B cell (primary cell): ENCODE measurements at regions of chr5 and their contacts with region 1.

Region 1: GRCh38 chr5:157548513-157549297 is 26.9 kb downstream of the ADAM19 start:
- DNase-seq: no peak
- ATAC-seq: no peak
- H3K4me3 ChIP-seq: no peak overlapping the region
- H3K4me3 Mint-ChIP-seq: peak overlapping the region; percentile 55
- H3K27ac ChIP-seq: peak overlapping the region; percentile 3 to 80
- H3K27ac Mint-ChIP-seq: peak overlapping the region; percentile 85
- H3K4me1 ChIP-seq: peaks cover 86% of the 10 kb centered on the region in 2 donors
- H3K4me1 Mint-ChIP-seq: peaks cover 90% of the 10 kb centered on the region
- H3K27me3 ChIP-seq: no peaks in the 10 kb centered on the region
- H3K27me3 Mint-ChIP-seq: no peaks in the 10 kb centered on the region
- CTCF ChIP-seq: no peak

Region 2: DNA sequence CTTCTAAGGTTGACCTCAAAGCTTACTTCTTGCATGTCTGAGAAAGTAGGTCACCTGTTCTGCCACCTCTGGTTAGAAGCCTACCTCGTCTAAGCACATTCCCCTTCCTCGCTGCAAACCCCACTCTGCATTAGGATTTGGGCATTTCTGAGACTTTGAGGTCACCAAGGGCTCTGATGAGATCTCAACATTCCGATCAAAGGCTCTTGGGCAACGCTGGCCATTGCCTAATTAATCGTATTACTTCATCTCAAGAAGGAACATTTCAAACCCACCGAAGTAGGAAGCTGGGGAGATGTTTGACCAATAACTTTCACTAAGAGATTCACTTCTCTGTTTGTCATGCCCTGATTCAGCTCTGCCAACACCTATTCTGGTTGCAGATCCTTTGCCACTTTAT is 18.3 kb after region 1 on chr5:
- CTCF ChIA-PET with region 1: interaction called, 13 read pairs
- POLR2A ChIA-PET with region 1: interaction called, 7 read pairs
- intact Hi-C with region 1: no loop called
- DNase-seq: peak; percentile 50
- ATAC-seq: no peak
- H3K4me3 ChIP-seq: peak overlapping the region in 2 of 5 experiments; percentile 15 to 29
- H3K4me3 Mint-ChIP-seq: peak overlapping the region; percentile 79
- H3K27ac ChIP-seq: peak overlapping the region; percentile 43 to 64
- H3K27ac Mint-ChIP-seq: peak overlapping the region; percentile 85
- H3K4me1 ChIP-seq: peaks cover 84 to 91% of the 10 kb centered on the region in 2 donors
- H3K4me1 Mint-ChIP-seq: peaks cover 83% of the 10 kb centered on the region
- H3K27me3 ChIP-seq: no peaks in the 10 kb centered on the region
- H3K27me3 Mint-ChIP-seq: no peaks in the 10 kb centered on the region
- CTCF ChIP-seq: no peak

Region 3: GRCh38 chr5:157681048-157681447 is 132.3 kb after region 1 on chr5:
- CTCF ChIA-PET with region 1: no interaction called
- POLR2A ChIA-PET with region 1: interaction called, 16 read pairs
- intact Hi-C with region 1: no loop called
- DNase-seq: no peak
- ATAC-seq: no peak
- H3K4me3 ChIP-seq: no peak overlapping the region
- H3K4me3 Mint-ChIP-seq: no peak overlapping the region
- H3K27ac ChIP-seq: no peak overlapping the region
- H3K27ac Mint-ChIP-seq: no peak overlapping the region
- H3K4me1 ChIP-seq: no peaks in the 10 kb centered on the region
- H3K4me1 Mint-ChIP-seq: peaks cover 2% of the 10 kb centered on the region
- H3K27me3 ChIP-seq: no peaks in the 10 kb centered on the region
- H3K27me3 Mint-ChIP-seq: no peaks in the 10 kb centered on the region
- CTCF ChIP-seq: no peak